Activated CD4-positive, alpha-beta T cell treated with anti-CD3 and anti-CD28 coated beads for 36 hours (primary cell): ENCODE measurements at regions of chr3 and their contacts with region 1.

Region 1: GRCh38 chr3:138594150-138594934 is at the start of gene CEP70:
- DNase-seq: peak; percentile 93
- ATAC-seq: peak; percentile 93
- H3K4me3 Mint-ChIP-seq: peak within 1 kb of the TSS; percentile 82
- H3K27ac Mint-ChIP-seq: peak within 1 kb of the TSS; percentile 91
- H3K4me1 Mint-ChIP-seq: peaks cover 8% of the 10 kb centered on the region
- H3K27me3 Mint-ChIP-seq: no peaks in the 10 kb centered on the region
- total RNA-seq, gene CEP70: 9.3 to 11.4 TPM

Region 2: DNA sequence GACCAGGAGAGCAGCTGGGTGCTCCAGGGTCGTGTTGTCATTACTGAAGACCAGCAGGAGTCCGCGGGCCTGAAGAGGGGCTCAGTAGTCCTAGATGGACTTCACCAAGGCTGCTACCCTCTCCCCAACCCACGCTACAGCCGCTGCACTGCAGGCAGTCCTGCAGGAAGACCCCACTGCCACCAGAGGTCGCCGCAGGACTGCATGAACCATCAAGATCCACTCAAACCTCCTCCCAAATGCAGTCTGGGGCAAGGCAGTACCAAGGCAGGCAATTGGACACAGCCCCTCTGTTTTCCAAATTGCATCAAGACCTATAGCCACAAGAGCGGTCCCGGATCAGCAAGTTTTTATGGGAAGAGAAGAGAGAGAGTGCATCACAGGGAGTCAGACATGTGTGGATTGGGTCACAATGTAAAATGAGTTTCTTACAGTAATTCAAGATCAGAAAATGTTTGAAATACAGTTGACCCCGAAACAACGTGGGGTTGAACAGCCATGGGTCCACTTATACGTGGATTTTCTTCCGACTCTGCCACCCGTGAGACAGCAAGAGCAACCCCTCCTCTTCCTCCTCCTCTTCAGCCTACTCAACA is 525.7 kb before region 1 on chr3:
- CTCF ChIA-PET with region 1: no interaction called
- POLR2A ChIA-PET with region 1: no interaction called
- intact Hi-C with region 1: loop called in 1 of 2 experiments (anchors 5 kb)
- DNase-seq: peak; percentile 90
- ATAC-seq: peak; percentile 55
- H3K4me3 Mint-ChIP-seq: no peak overlapping the region
- H3K27ac Mint-ChIP-seq: no peak overlapping the region
- H3K4me1 Mint-ChIP-seq: peaks cover 14% of the 10 kb centered on the region
- H3K27me3 Mint-ChIP-seq: peaks cover 18% of the 10 kb centered on the region

Region 3: DNA sequence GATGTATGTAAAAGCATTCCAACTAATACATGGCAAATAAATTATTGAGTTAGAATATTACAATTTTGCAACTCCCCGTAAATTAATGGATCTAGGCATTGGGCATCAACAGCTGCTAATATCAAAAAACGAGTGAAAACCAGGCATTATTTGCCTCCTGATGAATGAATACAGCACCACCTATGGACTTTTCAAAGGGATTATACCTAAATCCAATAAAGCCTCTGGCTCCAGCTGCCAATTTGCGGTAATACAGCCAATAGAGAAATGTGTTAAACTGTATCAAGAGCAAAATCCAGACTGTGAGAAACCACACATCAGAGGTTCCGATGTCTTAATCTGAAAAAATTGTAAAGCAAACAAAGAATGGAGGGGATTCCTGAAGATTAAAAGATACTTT is 445.8 kb before region 1 on chr3:
- CTCF ChIA-PET with region 1: no interaction called
- POLR2A ChIA-PET with region 1: no interaction called
- intact Hi-C with region 1: no loop called
- DNase-seq: no peak
- ATAC-seq: no peak
- H3K4me3 Mint-ChIP-seq: no peak overlapping the region
- H3K27ac Mint-ChIP-seq: no peak overlapping the region
- H3K4me1 Mint-ChIP-seq: no peaks in the 10 kb centered on the region
- H3K27me3 Mint-ChIP-seq: peaks cover 2% of the 10 kb centered on the region

Region 4: DNA sequence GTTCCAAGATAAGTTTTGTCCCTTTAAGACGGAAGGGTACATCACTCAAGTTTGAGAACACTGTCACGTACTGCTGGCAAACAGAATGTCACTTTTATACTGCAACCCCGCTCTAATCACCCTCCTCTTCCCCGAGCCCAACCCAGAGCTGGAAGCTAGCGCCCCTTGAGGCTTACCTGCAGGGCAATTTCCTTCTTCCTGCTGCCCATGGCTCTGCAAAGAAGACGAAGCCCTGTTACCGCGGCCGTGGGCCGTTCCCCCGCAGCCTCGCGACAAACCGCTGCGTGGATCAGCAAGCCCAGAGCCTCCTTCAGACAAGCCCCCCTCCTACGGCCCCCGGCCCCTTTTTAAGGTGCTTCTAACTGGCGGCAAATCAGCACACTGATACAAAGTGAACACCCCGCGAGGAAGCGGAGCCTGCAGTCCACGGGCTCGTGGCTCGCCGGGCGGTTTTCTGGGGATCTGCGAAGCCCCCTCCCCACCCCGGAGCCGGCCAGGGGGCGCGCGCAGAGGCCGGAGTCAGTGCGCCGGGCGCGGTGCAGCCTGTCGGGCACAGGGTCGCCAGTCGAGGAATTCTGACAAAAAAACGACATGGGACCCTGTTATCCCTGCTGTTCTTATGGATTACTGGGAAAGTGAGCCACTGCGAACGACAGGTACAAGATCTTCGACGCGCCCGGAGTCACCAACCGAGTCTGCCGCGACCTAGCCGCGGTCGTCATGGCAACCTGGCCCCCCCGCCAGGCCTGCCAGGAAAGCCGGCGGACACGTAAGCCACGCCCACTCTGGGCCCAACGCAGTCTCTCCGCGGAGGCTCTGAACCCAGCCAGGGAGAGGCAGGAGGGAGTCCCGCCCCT is 265.0 kb before region 1 on chr3 and contains the start of gene NME9:
- CTCF ChIA-PET with region 1: no interaction called
- POLR2A ChIA-PET with region 1: no interaction called
- intact Hi-C with region 1: loop called in 1 of 2 experiments (anchors 2 kb)
- DNase-seq: peak; percentile 93
- ATAC-seq: peak; percentile 90
- H3K4me3 Mint-ChIP-seq: peak within 1 kb of the TSS; percentile 76
- H3K27ac Mint-ChIP-seq: peak within 1 kb of the TSS; percentile 84
- H3K4me1 Mint-ChIP-seq: peaks cover 30% of the 10 kb centered on the region
- H3K27me3 Mint-ChIP-seq: no peaks in the 10 kb centered on the region
- total RNA-seq, gene NME9: 0.46 to 0.65 TPM

Region 5: GRCh38 chr3:138608322-138609135 is 14.2 kb after region 1 on chr3 and contains the start of gene FAIM:
- CTCF ChIA-PET with region 1: interaction called, 24 read pairs
- POLR2A ChIA-PET with region 1: interaction called, 3 read pairs
- intact Hi-C with region 1: loop called (anchors 1 kb)
- DNase-seq: peak; percentile 79
- ATAC-seq: peak; percentile 74
- H3K4me3 Mint-ChIP-seq: peak within 1 kb of the TSS; percentile 77
- H3K27ac Mint-ChIP-seq: peak within 1 kb of the TSS; percentile 95
- H3K4me1 Mint-ChIP-seq: peaks cover 13% of the 10 kb centered on the region
- H3K27me3 Mint-ChIP-seq: no peaks in the 10 kb centered on the region
- total RNA-seq, gene FAIM: 2.6 to 4.0 TPM

Region 6: GRCh38 chr3:138834359-138835212 is 240.2 kb after region 1 on chr3 and contains the start of gene PIK3CB:
- CTCF ChIA-PET with region 1: no interaction called
- POLR2A ChIA-PET with region 1: no interaction called
- intact Hi-C with region 1: loop called (anchors 1 to 5 kb)
- DNase-seq: peak; percentile 93
- ATAC-seq: peak; percentile 91
- H3K4me3 Mint-ChIP-seq: peak within 1 kb of the TSS; percentile 94
- H3K27ac Mint-ChIP-seq: peak within 1 kb of the TSS; percentile 100
- H3K4me1 Mint-ChIP-seq: peaks cover 32% of the 10 kb centered on the region
- H3K27me3 Mint-ChIP-seq: no peaks in the 10 kb centered on the region
- total RNA-seq, gene PIK3CB: 16.2 to 19.1 TPM

Region 7: GRCh38 chr3:138923531-138923994 is 329.2 kb after region 1 on chr3:
- CTCF ChIA-PET with region 1: interaction called, 52 read pairs
- POLR2A ChIA-PET with region 1: no interaction called
- intact Hi-C with region 1: loop called in 1 of 2 experiments (anchors 1 kb)
- DNase-seq: peak; percentile 92
- ATAC-seq: peak; percentile 98
- H3K4me3 Mint-ChIP-seq: no peak overlapping the region
- H3K27ac Mint-ChIP-seq: no peak overlapping the region
- H3K4me1 Mint-ChIP-seq: no peaks in the 10 kb centered on the region
- H3K27me3 Mint-ChIP-seq: peaks cover 2% of the 10 kb centered on the region

Region 8: DNA sequence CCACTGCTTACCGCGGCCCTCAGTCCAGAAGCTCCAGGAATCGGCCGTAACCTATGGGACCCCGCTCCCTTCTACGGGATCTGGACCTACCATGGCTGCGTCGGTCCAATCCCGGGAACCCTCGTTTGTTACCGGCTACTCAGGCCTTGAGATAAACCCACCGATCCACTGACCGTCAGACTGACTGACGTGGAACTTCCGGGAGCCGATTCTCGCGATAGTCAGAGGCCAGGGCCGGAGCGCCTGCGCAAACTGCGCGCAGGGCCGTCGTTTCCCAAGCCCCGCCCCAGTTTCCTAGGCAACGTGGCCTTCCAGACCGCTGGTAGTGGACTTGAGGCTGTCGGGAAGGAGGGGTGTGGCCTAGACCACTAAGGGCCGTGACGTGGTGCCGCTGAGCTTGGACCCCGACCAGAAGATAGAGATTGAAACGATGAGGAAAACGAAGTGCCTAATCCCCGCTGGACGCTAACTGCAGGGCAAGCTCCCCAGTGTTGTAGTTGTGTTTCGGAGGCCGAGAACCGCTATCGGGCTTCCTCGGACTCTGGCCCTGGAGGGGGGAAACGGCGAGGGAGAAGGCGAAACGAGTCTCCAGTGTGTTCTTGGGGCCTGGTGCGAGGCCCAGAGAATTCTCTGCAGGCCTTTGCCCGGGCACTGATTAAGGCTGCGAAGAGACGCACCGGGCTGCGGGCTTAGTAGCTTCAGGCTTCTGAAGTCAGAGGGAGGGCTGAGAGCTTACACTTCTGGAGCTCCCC is 795.3 kb after region 1 on chr3 and contains the start of gene COPB2:
- CTCF ChIA-PET with region 1: no interaction called
- POLR2A ChIA-PET with region 1: no interaction called
- intact Hi-C with region 1: loop called in 1 of 2 experiments (anchors 1 kb)
- DNase-seq: peak; percentile 98
- ATAC-seq: peak; percentile 93
- H3K4me3 Mint-ChIP-seq: peak within 1 kb of the TSS; percentile 96
- H3K27ac Mint-ChIP-seq: peak within 1 kb of the TSS; percentile 97
- H3K4me1 Mint-ChIP-seq: peaks cover 38% of the 10 kb centered on the region
- H3K27me3 Mint-ChIP-seq: no peaks in the 10 kb centered on the region
- total RNA-seq, gene COPB2: 90.9 to 99.2 TPM